A549 (cell line): ENCODE measurements at regions of chr6 and their contacts with region 1.

Region 1: DNA sequence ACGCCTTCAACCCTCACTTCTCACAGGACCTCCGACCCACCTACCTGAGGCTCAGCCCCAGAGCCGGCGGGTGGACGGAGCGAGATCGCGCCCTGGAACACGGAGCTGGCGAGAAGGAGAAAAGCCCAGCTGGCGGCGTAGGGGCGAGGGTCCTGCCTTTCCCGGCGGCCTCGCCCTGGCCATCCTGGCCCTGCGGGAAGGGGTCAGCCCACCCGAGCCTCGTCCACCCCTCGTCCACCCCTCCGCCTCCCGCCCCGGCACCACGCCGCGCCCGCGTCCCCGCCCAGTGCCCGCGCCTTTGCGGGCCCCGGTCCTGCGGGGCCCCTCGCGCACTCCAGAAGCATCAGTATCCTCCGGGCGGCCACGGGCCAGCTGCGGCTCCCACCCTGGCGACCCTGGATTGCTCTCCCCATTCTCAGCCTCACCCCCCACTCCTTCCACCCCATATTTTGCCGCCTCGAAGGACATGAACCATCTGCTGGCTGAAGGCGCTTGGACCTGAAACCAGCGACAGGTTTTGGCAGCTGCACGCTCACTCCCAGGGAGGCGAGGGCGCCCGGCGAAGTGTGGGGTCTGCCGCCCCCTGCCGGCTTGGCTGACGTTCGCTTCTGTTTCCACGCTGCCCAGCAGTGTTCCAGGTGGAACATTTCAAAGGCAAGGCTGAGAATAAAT is 65.1 kb downstream of the PLG start:
- DNase-seq: peak; percentile 61 to 62
- ATAC-seq: peak; percentile 98 to 99
- H3K4me3 ChIP-seq: peak overlapping the region; percentile 56
- H3K27ac ChIP-seq: peak overlapping the region; percentile 53 to 81; a peak in 5 of 6 replicates
- H3K4me1 ChIP-seq: 0 out of 3 replicates have a peak, but pooled peaks cover 2% of the 10 kb centered on the region
- CTCF ChIP-seq: peak; percentile 66
- EP300 ChIP-seq: no peak
- POLR2A ChIP-seq: no peak
- RAD21 ChIP-seq: peak; percentile 57 to 58

Region 2: DNA sequence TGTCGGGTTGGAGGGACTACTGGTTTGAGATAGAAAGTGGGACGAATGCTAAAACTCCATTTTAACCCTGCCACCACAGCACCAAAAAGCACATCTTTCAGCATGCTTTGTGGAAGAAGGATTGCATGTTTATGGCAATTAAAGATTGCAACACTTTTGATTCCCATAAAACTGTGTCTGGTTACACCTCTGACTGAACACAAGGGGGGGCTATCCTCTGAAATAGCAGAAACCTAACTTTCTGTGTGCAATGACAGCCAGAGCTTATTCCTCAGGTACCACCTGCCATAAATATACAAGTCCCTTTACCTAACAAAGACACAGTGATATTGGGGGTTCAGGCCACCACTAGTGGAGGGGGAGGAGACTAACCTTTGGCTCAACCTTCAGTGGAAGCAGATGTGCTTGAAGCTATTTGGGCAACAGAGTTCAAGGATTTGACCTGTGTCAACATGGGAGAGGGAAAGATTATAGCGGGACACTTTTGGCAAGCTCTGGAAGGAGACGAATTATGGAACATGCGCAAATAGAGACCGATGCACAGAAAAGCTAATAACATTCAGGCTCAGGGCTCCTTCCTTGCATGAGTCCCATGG is 74.7 kb before region 1 on chr6:
- CTCF ChIA-PET with region 1: no interaction called
- POLR2A ChIA-PET with region 1: no interaction called
- DNase-seq: peak in 1 of 2 experiments; percentile 2
- ATAC-seq: no peak
- H3K4me3 ChIP-seq: no peak overlapping the region
- H3K27ac ChIP-seq: no peak overlapping the region
- H3K4me1 ChIP-seq: no peaks in the 10 kb centered on the region
- CTCF ChIP-seq: no peak
- EP300 ChIP-seq: no peak
- POLR2A ChIP-seq: no peak
- RAD21 ChIP-seq: no peak

Region 3: GRCh38 chr6:160756871-160757270 is 10.3 kb before region 1 on chr6:
- CTCF ChIA-PET with region 1: interaction called, 10 read pairs
- POLR2A ChIA-PET with region 1: no interaction called
- DNase-seq: no peak
- ATAC-seq: no peak
- H3K4me3 ChIP-seq: no peak overlapping the region
- H3K27ac ChIP-seq: no peak overlapping the region
- H3K4me1 ChIP-seq: no peaks in the 10 kb centered on the region
- CTCF ChIP-seq: no peak
- EP300 ChIP-seq: no peak
- POLR2A ChIP-seq: no peak
- RAD21 ChIP-seq: no peak